PC-9 (cell line): ENCODE measurements at regions of chr13 and their contacts with region 1.

Region 1: GRCh38 chr13:42847891-42848663 is 66.7 kb downstream of the FAM216B start:
- DNase-seq: no peak
- H3K4me3 ChIP-seq: no peak overlapping the region
- H3K27ac ChIP-seq: no peak overlapping the region
- H3K4me1 ChIP-seq: no peaks in the 10 kb centered on the region
- H3K27me3 ChIP-seq: no peaks in the 10 kb centered on the region
- CTCF ChIP-seq: no peak

Region 2: DNA sequence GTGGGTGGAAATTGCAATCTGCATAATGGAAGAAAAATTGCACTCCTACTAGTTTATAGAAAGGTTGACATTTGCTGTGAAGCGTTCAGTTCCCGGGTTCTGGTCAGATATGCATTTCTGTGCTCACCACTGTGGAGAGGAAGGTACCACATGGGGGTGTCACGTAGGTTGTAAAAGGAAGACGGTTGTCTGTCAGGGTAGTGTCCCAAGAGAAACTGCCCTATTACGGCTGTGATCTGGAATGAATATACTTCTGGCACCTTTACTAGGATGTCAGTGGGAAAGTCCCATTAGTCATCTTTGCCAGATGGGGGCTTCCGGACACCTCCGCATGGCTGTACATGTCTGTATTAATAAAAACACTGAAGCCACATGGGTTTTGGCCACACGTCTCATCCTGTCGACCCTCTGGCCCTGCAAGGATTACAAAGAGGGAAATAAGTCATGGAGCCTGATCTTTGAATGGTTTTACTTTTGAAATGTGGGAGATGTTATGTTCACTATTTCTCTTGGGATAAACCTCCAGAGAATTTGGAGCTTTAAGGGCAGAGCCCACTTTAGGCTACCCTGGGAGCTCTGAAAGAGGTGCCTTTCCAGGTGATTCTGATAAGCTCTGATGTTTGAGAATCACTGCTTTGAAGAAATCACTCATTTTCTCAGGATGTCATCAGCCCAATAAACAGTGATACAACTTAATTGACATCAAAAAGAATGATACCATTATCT is 442.2 kb before region 1 on chr13:
- CTCF ChIA-PET with region 1: no interaction called
- POLR2A ChIA-PET with region 1: interaction called, 14 read pairs
- intact Hi-C with region 1: no loop called
- DNase-seq: no peak
- H3K4me3 ChIP-seq: no peak overlapping the region
- H3K27ac ChIP-seq: no peak overlapping the region
- H3K4me1 ChIP-seq: no peaks in the 10 kb centered on the region
- H3K27me3 ChIP-seq: no peaks in the 10 kb centered on the region
- CTCF ChIP-seq: no peak

Region 3: GRCh38 chr13:43986421-43986981 is 1138.4 kb after region 1 on chr13:
- CTCF ChIA-PET with region 1: no interaction called
- POLR2A ChIA-PET with region 1: no interaction called
- intact Hi-C with region 1: no loop called
- DNase-seq: no peak
- H3K4me3 ChIP-seq: no peak overlapping the region
- H3K27ac ChIP-seq: no peak overlapping the region
- H3K4me1 ChIP-seq: peaks cover under 1% of the 10 kb centered on the region; the same call in 1 of the 2 replicates
- H3K27me3 ChIP-seq: no peaks in the 10 kb centered on the region
- CTCF ChIP-seq: no peak